ENCODE measurements at regions of chr4 and their contacts with region 1.

Region 1: DNA sequence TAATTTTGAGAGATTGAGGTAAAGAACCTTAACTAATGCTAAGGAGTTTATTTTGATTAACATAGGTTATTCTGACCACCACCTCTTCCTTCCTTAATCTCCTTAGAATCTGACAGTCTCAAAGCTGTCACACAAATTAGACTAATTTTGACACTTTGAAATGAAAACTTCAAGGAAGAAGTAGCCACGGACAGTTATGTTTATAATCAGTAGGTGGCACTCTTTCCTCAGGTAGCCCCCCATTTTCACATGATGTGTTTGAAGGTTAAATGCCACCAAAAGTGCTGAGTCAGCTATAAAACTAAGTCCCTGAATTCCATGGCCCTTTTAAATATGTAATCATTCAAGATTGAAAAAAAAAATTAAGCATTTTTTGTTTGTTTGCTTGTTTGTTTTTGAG is 22.4 kb downstream of the TMEM33 start:
- DNase-seq: no peak
- H3K4me3 ChIP-seq: no peak overlapping the region
- H3K27ac ChIP-seq: no peak overlapping the region
- H3K4me1 ChIP-seq: no peaks in the 10 kb centered on the region; a peak in 1 of 7 replicates
- H3K27me3 ChIP-seq: no peaks in the 10 kb centered on the region
- CTCF ChIP-seq: peak in 2 of 3 experiments; percentile 47 to 62; a peak in 3 of 4 replicates
- EP300 ChIP-seq: no peak
- POLR2A ChIP-seq: no peak
- RAD21 ChIP-seq: peak; percentile 80 to 82

Region 2: GRCh38 chr4:41887821-41888686 is 69.6 kb before region 1 on chr4:
- CTCF ChIA-PET with region 1: no interaction called
- POLR2A ChIA-PET with region 1: no interaction called
- DNase-seq: no peak
- H3K4me3 ChIP-seq: no peak overlapping the region
- H3K27ac ChIP-seq: no peak overlapping the region
- H3K4me1 ChIP-seq: no peaks in the 10 kb centered on the region
- H3K27me3 ChIP-seq: peaks cover 3 to 17% (median 16%) of the 10 kb centered on the region in 4 experiments
- CTCF ChIP-seq: peak in 2 of 3 experiments; percentile 63 to 69; a peak in 3 of 4 replicates
- EP300 ChIP-seq: no peak
- POLR2A ChIP-seq: no peak
- RAD21 ChIP-seq: peak; percentile 79 to 80

Region 3: GRCh38 chr4:41934815-41935651 is 22.6 kb before region 1 on chr4 and contains the start of gene TMEM33:
- CTCF ChIA-PET with region 1: interaction called, 4 read pairs
- POLR2A ChIA-PET with region 1: interaction called, 11 read pairs
- DNase-seq: peak; percentile 76 to 85
- H3K4me3 ChIP-seq: peak within 1 kb of the TSS; percentile 96 to 98 (median 97)
- H3K27ac ChIP-seq: peak within 1 kb of the TSS; percentile 67
- H3K4me1 ChIP-seq: peaks cover 0 to 6% (median 2%) of the 10 kb centered on the region in 4 experiments; a peak in 3 of 7 replicates
- H3K27me3 ChIP-seq: no peaks in the 10 kb centered on the region
- CTCF ChIP-seq: no peak
- EP300 ChIP-seq: no peak
- POLR2A ChIP-seq: peak; percentile 53 to 85
- RAD21 ChIP-seq: no peak
- total RNA-seq, gene TMEM33: 86.7 and 94.4 TPM in 2 replicates

Region 4: GRCh38 chr4:41977709-41978108 is 20.1 kb after region 1 on chr4:
- CTCF ChIA-PET with region 1: interaction called, 11 read pairs
- POLR2A ChIA-PET with region 1: no interaction called
- DNase-seq: no peak
- H3K4me3 ChIP-seq: no peak overlapping the region
- H3K27ac ChIP-seq: no peak overlapping the region
- H3K4me1 ChIP-seq: peaks cover 0 to 4% (median 2%) of the 10 kb centered on the region in 4 experiments; a peak in 3 of 7 replicates
- H3K27me3 ChIP-seq: no peaks in the 10 kb centered on the region
- CTCF ChIP-seq: no peak
- EP300 ChIP-seq: no peak
- POLR2A ChIP-seq: no peak
- RAD21 ChIP-seq: no peak

Region 5: DNA sequence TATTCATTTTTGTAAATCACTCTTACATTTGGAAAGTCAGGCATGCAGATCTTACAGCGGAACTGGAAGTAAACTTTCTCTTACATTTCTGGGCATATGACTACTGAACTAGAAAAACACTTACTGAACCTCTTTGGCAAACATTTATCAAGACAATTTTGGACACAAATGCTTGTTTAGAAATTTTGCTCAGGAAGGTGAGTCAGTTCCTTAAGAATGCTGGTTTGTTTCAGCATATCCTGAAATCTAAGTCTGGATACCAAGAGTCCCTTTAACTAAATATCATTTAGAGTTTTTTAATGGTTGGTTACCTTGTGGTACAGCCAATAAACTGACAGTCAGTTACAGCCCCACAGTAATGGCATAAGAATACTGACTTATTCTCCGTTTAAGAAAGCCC is 454.6 kb after region 1 on chr4:
- CTCF ChIA-PET with region 1: no interaction called
- POLR2A ChIA-PET with region 1: no interaction called
- DNase-seq: no peak
- H3K4me3 ChIP-seq: no peak overlapping the region
- H3K27ac ChIP-seq: no peak overlapping the region
- H3K4me1 ChIP-seq: peaks cover 0 to 4% (median 1%) of the 10 kb centered on the region in 4 experiments; a peak in 3 of 7 replicates
- H3K27me3 ChIP-seq: no peaks in the 10 kb centered on the region
- CTCF ChIP-seq: no peak
- EP300 ChIP-seq: no peak
- POLR2A ChIP-seq: no peak
- RAD21 ChIP-seq: no peak

Measured in H1 (cell line).